ENCODE measurements at regions of chr10 and their contacts with region 1.

Region 1: DNA sequence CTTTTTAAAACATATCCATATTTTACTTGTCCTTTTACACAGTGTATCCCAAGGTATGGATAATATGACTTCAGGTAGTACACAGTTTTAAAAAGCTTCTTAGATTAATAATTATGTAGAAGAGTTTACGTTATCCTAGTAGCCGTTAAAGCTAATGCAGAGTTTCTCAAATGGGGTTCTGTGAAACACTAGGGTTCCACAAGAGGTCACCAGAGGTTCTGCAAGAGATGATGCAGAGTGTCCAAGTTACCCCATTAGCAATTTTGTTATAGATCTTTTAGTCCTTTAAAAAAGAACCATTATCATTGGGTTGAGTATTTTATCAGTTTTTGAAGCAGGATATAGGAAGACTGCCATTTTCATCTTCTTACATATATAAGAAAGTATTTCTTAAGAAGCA is 298.9 kb upstream of the HPS1 start:
- DNase-seq: no peak
- H3K27ac ChIP-seq: no peak overlapping the region
- CTCF ChIP-seq: no peak

Region 2: DNA sequence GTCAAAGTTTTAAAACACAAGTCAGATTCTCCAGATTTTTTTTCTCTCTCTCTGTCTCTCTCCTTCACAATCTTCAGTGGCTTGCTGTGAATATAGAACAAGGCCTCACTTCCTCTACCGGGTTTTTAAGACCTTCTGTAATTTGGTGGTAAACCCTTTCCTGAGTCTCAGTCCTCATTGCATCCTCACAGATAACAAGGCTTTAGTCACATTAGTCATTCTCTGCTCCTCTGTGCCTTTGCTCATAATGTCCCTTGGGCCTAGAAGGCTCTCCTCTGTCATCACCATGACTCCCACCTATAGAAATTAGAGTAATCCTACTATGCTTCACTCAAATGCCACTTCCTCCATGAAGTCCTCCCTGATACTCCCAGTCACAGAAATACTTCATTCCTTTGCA is 126.2 kb before region 1 on chr10:
- CTCF ChIA-PET with region 1: no interaction called
- POLR2A ChIA-PET with region 1: no interaction called
- DNase-seq: no peak
- H3K27ac ChIP-seq: no peak overlapping the region
- CTCF ChIP-seq: no peak

Region 3: GRCh38 chr10:98953251-98953650 is 207.6 kb after region 1 on chr10:
- CTCF ChIA-PET with region 1: interaction called, 11 read pairs
- POLR2A ChIA-PET with region 1: no interaction called
- DNase-seq: no peak
- H3K27ac ChIP-seq: no peak overlapping the region
- CTCF ChIP-seq: no peak